ENCODE measurements at regions of chr6 and their contacts with region 1.

Region 1: GRCh38 chr6:18387061-18387721 is at the start of gene RNF144B:
- DNase-seq: peak; percentile 95
- ATAC-seq: peak; percentile 96
- total RNA-seq, gene RNF144B: 18.2 TPM

Region 2: GRCh38 chr6:18343741-18344140 is 43.5 kb before region 1 on chr6:
- intact Hi-C with region 1: loop called (anchors 5 kb)
- DNase-seq: no peak
- ATAC-seq: no peak

Region 3: GRCh38 chr6:18371010-18371409 is 16.2 kb before region 1 on chr6:
- intact Hi-C with region 1: loop called (anchors 1 kb)
- DNase-seq: no peak
- ATAC-seq: no peak